ENCODE measurements at regions of chr18 and their contacts with region 1.

Region 1: GRCh38 chr18:7064326-7064725 is 53.3 kb downstream of the LAMA1 start:
- DNase-seq: peak; percentile 58 to 72
- H3K4me3 ChIP-seq: no peak overlapping the region
- H3K4me3 Mint-ChIP-seq: peak overlapping the region; percentile 1
- H3K27ac Mint-ChIP-seq: peak overlapping the region; percentile 40
- H3K4me1 ChIP-seq: peaks cover 92% of the 10 kb centered on the region
- H3K4me1 Mint-ChIP-seq: peaks cover 55% of the 10 kb centered on the region
- H3K27me3 ChIP-seq: no peaks in the 10 kb centered on the region
- H3K27me3 Mint-ChIP-seq: no peaks in the 10 kb centered on the region
- CTCF ChIP-seq: no peak

Region 2: DNA sequence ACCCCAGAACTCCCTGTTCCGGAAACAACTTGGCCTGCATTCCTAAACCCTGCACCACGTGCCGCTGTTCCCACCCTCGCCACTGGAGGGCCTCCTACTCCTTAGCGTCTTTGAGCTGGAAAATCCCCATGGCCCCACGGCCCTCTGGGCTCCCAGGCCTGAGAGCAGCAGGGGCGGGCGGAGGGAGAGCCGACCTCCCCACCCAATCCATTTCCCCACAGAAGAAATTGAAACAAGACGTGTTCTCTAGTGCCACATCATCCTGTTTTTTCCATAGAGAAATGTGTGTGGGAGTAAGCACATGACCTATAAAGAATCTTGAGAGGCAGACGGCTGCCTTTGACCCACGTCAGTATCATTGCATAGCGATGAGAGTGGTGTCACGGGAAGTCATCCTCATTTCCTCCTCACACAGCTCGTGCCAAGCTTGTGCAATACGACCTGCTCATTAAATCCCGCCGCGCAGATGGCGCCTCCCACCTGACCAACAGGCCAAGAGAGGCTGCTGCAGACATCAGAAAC is 25.9 kb before region 1 on chr18:
- CTCF ChIA-PET with region 1: interaction called, 6 read pairs
- POLR2A ChIA-PET with region 1: interaction called, 7 read pairs
- intact Hi-C with region 1: loop called (anchors 1 kb)
- DNase-seq: peak; percentile 93 to 94
- H3K4me3 ChIP-seq: peak overlapping the region; percentile 31
- H3K4me3 Mint-ChIP-seq: peak overlapping the region; percentile 55
- H3K27ac Mint-ChIP-seq: peak overlapping the region; percentile 85
- H3K4me1 ChIP-seq: peaks cover 53% of the 10 kb centered on the region
- H3K4me1 Mint-ChIP-seq: peaks cover 35% of the 10 kb centered on the region
- H3K27me3 ChIP-seq: no peaks in the 10 kb centered on the region
- H3K27me3 Mint-ChIP-seq: no peaks in the 10 kb centered on the region
- CTCF ChIP-seq: peak; percentile 82 to 89

Region 3: DNA sequence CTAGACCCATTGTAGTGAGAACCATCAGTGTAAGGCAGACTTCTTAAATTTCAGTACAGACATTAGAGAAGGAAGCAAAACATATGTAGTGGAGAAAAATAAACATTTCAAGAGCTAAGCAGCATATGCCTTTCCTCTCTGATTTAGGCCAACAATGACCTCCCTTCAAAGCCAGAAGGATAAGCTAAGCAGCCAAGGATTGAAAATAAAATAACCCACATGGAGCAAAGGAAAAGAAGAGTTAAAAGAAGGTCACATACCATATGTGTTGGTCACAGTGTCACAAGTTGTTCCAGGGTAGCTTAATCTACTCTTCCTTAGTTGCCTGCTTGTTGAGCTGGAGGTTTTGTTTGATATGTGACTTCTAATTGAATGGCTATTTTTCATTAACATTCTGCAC is 68.9 kb after region 1 on chr18:
- CTCF ChIA-PET with region 1: interaction called, 4 read pairs
- POLR2A ChIA-PET with region 1: interaction called, 16 read pairs
- intact Hi-C with region 1: loop called (anchors 1 kb)
- DNase-seq: peak in 1 of 2 experiments; percentile 68
- H3K4me3 ChIP-seq: no peak overlapping the region
- H3K4me3 Mint-ChIP-seq: peak overlapping the region; percentile 67
- H3K27ac Mint-ChIP-seq: peak overlapping the region; percentile 72
- H3K4me1 ChIP-seq: peaks cover 50% of the 10 kb centered on the region
- H3K4me1 Mint-ChIP-seq: peaks cover 44% of the 10 kb centered on the region
- H3K27me3 ChIP-seq: no peaks in the 10 kb centered on the region
- H3K27me3 Mint-ChIP-seq: no peaks in the 10 kb centered on the region
- CTCF ChIP-seq: no peak

Region 4: GRCh38 chr18:7164323-7165004 is 100.1 kb after region 1 on chr18:
- CTCF ChIA-PET with region 1: no interaction called
- POLR2A ChIA-PET with region 1: interaction called, 10 read pairs
- intact Hi-C with region 1: no loop called
- DNase-seq: peak in 1 of 2 experiments; percentile 50
- H3K4me3 ChIP-seq: no peak overlapping the region
- H3K4me3 Mint-ChIP-seq: no peak overlapping the region
- H3K27ac Mint-ChIP-seq: peak overlapping the region; percentile 7
- H3K4me1 ChIP-seq: peaks cover 76% of the 10 kb centered on the region
- H3K4me1 Mint-ChIP-seq: peaks cover 58% of the 10 kb centered on the region
- H3K27me3 ChIP-seq: no peaks in the 10 kb centered on the region
- H3K27me3 Mint-ChIP-seq: no peaks in the 10 kb centered on the region
- CTCF ChIP-seq: peak; percentile 28 to 47